Activated CD4-positive, alpha-beta T cell treated with anti-CD3 and anti-CD28 coated beads for 36 hours (primary cell): ENCODE measurements at regions of chr9 and their contacts with region 1.

Region 1: GRCh38 chr9:136790927-136791641 is at the start of gene TMEM141:
- DNase-seq: peak; percentile 100
- ATAC-seq: peak; percentile 93
- H3K4me3 Mint-ChIP-seq: peak within 1 kb of the TSS; percentile 80
- H3K27ac Mint-ChIP-seq: peak within 1 kb of the TSS; percentile 84
- H3K4me1 Mint-ChIP-seq: peaks cover 20% of the 10 kb centered on the region
- H3K27me3 Mint-ChIP-seq: no peaks in the 10 kb centered on the region
- total RNA-seq, gene TMEM141: 30.9 to 47.1 TPM

Region 2: DNA sequence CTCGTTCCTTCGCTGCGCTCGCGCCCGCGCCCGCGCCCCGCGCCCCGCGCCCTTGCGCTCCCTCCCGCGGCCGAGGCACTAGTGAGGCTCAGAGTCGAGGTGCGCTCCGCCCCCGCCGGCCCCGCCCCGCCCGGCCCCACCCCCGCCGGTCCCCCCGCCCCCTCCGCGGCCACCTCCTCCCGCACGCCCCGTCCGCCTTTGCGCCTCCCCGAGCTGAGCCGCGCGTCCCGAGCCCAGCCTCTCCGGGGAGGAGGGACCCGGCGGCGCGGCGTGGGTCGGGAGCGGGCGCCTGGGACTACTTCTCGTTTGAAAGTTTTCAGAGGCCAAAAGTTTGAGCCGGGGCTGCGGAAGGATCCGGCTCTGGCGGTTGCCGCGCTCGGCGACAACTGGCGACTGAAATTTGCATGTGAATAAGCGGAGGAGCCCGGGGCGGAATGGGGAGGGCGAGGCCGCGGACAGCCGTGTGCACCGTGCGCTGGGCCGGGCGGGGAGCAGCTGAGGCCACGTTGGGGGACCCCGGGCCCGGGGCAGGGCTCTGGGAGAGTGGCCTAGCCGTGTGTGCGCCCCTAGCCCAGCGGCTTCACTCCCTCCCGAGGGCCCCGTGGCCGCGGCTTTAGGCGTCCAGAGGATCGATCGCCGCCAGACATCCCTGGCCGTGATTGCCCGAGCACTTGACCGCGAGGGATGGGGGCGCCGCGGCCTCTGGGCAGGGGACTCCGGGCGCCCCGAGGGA is 245.0 kb before region 1 on chr9 and contains the start of gene NOTCH1:
- CTCF ChIA-PET with region 1: no interaction called
- POLR2A ChIA-PET with region 1: no interaction called
- intact Hi-C with region 1: loop called in 1 of 2 experiments (anchors 1 kb)
- DNase-seq: peak; percentile 95
- ATAC-seq: peak; percentile 75
- H3K4me3 Mint-ChIP-seq: peak within 1 kb of the TSS; percentile 92
- H3K27ac Mint-ChIP-seq: peak within 1 kb of the TSS; percentile 88
- H3K4me1 Mint-ChIP-seq: peaks cover 34% of the 10 kb centered on the region
- H3K27me3 Mint-ChIP-seq: no peaks in the 10 kb centered on the region
- total RNA-seq, gene NOTCH1: 70.0 to 79.4 TPM

Region 3: DNA sequence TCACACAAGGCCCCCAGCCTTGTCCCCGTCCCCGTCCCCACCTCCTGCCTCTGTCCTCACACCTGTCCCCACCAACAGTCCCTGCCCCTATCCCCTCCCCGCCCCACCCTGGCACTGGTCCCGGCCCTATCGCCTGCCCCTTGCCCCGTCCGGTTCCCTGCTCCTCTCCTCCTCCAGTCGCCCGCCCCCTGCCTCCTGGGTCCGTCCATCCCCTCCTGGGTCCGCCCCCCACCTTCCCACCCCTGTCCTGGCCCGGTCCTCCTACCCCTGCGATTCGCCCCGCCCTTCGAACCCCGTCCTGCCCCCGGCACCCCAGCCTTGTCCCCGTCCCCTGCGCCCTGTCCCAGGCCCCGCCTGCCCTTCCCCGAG is 74.6 kb after region 1 on chr9:
- CTCF ChIA-PET with region 1: no interaction called
- POLR2A ChIA-PET with region 1: no interaction called
- intact Hi-C with region 1: loop called in 1 of 2 experiments (anchors 1 kb)
- DNase-seq: no peak
- ATAC-seq: no peak
- H3K4me3 Mint-ChIP-seq: peak overlapping the region; percentile 81
- H3K27ac Mint-ChIP-seq: peak overlapping the region; percentile 38
- H3K4me1 Mint-ChIP-seq: peaks cover 16% of the 10 kb centered on the region
- H3K27me3 Mint-ChIP-seq: no peaks in the 10 kb centered on the region

Region 4: DNA sequence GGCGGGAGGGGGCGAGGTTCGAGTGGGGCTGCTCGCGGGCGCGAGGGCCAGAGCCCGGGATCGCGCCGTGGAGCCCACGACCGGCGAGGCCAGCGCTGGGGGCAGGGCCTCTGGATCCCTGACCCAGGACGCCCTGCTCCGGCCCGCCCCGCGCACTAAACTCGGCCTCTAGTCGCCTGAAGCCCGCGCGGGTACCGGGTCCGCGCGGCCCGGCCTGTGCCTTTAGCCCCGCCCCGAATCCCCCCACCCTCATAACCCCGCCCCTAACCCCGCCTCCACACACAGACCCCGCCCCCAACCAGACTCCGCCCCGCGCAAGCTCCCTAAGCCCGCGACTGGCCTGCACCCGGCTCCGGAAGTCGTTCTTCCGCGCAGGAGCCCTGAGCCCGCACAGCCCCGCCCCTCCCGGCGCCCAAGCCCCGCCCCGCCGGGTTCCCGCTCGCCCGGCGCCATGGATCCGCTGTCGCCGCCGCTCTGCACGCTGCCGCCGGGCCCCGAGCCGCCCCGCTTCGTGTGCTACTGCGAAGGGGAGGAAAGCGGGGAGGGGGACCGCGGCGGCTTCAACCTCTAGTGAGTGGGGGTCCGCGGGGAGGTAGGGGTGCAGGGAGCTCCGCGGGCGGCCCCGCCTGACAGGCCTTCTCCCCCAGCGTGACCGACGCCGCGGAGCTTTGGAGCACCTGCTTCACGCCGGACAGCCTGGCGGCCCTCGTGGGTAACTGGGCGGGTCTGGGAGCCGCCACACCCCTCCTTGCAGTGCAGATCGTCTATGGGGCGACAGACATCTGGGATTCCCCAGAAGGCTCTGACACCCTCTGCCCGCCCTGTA is 201.1 kb after region 1 on chr9 and contains the start of gene PAXX:
- CTCF ChIA-PET with region 1: interaction called, 3 read pairs
- POLR2A ChIA-PET with region 1: no interaction called
- intact Hi-C with region 1: loop called (anchors 1 kb)
- DNase-seq: peak; percentile 98
- ATAC-seq: peak; percentile 95
- H3K4me3 Mint-ChIP-seq: peak within 1 kb of the TSS; percentile 81
- H3K27ac Mint-ChIP-seq: peak within 1 kb of the TSS; percentile 70
- H3K4me1 Mint-ChIP-seq: peaks cover 22% of the 10 kb centered on the region
- H3K27me3 Mint-ChIP-seq: peaks cover 4% of the 10 kb centered on the region
- total RNA-seq, gene PAXX: 52.7 to 67.1 TPM

Region 5: DNA sequence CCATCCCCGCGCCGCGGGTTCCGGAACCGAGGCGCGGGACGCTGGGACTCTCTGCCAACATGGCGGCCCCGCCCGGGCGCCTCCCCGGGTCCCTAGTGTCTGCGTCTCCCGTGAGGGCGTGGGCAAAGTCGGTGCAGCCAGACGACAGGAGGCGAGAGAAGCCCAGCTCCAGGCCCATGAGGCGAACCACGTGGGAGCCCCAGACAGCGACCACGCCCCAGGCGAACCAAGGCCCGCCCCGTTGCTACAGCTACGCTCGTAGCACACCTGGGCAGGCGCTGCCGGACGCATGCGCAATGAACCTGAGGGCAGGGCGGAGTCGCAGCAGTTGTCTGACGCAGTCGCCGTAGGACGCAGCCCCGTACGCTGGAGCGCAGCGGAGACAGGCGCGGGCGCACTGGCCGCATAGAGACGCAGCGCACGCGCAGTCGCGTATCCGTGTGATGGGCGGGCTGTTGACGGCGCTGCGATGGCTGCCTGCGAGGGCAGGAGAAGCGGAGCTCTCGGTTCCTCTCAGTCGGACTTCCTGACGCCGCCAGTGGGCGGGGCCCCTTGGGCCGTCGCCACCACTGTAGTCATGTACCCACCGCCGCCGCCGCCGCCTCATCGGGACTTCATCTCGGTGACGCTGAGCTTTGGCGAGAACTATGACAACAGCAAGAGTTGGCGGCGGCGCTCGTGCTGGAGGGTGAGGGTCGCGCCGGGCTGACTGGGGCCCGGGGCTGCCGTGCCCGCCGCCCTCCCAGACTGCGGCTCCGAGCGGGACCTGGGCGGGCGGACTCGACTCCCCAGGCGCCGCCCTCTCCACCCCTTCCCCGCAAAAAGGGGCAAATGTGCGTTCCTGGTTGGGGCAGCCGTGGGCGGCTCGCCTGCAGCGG is 295.7 kb after region 1 on chr9 and contains the start of gene MAN1B1:
- CTCF ChIA-PET with region 1: no interaction called
- POLR2A ChIA-PET with region 1: interaction called, 6 read pairs
- intact Hi-C with region 1: loop called (anchors 1 kb)
- DNase-seq: peak; percentile 100
- ATAC-seq: peak; percentile 85
- H3K4me3 Mint-ChIP-seq: peak within 1 kb of the TSS; percentile 88
- H3K27ac Mint-ChIP-seq: peak within 1 kb of the TSS; percentile 96
- H3K4me1 Mint-ChIP-seq: peaks cover 46% of the 10 kb centered on the region
- H3K27me3 Mint-ChIP-seq: no peaks in the 10 kb centered on the region
- total RNA-seq, gene MAN1B1: 21.6 to 26.7 TPM

Region 6: DNA sequence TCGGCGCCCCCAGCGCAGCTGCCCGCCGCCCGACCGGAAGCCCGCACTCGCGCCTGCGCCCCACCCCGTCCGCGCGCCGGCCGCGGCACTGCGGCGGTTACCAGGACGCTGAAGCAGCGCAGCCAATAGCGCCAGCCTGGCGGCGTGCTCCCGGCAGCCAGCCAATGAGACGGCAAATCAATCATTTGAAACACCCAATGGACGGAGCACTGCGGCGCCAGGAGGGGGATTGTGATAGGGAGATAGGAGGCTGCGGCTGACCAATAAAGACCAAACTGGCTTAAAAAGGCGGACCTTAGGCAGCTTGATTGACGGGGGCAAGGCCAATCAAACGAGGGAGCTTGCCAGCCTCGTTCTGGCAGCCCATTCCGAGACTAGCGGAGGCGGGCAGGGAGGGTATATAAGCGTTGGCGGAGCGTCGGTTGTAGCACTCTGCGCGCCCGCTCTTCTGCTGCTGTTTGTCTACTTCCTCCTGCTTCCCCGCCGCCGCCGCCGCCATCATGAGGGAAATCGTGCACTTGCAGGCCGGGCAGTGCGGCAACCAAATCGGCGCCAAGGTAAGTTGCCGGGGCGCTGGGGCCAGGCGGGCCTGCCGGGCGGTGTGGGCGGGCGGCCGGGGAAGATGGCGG is 449.9 kb after region 1 on chr9 and contains the start of gene TUBB4B:
- CTCF ChIA-PET with region 1: no interaction called
- POLR2A ChIA-PET with region 1: no interaction called
- intact Hi-C with region 1: loop called in 1 of 2 experiments (anchors 1 kb)
- DNase-seq: peak; percentile 98
- ATAC-seq: peak; percentile 84
- H3K4me3 Mint-ChIP-seq: peak within 1 kb of the TSS; percentile 83
- H3K27ac Mint-ChIP-seq: peak within 1 kb of the TSS; percentile 87
- H3K4me1 Mint-ChIP-seq: peaks cover 27% of the 10 kb centered on the region
- H3K27me3 Mint-ChIP-seq: no peaks in the 10 kb centered on the region
- total RNA-seq, gene TUBB4B: 264 to 278 TPM